ENCODE measurements at regions of chr16 and their contacts with region 1.

Region 1: GRCh38 chr16:70438969-70439862 is at the start of gene ST3GAL2:
- DNase-seq: peak; percentile 90 to 94 (median 91)
- H3K4me3 ChIP-seq: peak within 1 kb of the TSS; percentile 67 to 95
- H3K4me3 Mint-ChIP-seq: peak within 1 kb of the TSS; percentile 93 to 99 (median 96)
- H3K27ac ChIP-seq: peak within 1 kb of the TSS; percentile 64
- H3K27ac Mint-ChIP-seq: peak within 1 kb of the TSS; percentile 86 to 97 (median 94)
- H3K4me1 ChIP-seq: peaks cover 35% of the 10 kb centered on the region
- H3K4me1 Mint-ChIP-seq: peaks cover 17 to 49% (median 35%) of the 10 kb centered on the region in 4 donors
- H3K27me3 ChIP-seq: no peaks in the 10 kb centered on the region
- H3K27me3 Mint-ChIP-seq: no peaks in the 10 kb centered on the region
- total RNA-seq, gene ST3GAL2: 27.5 to 30.8 TPM

Region 2: GRCh38 chr16:70337814-70338213 is 101.4 kb before region 1 on chr16:
- CTCF ChIA-PET with region 1: no interaction called
- POLR2A ChIA-PET with region 1: no interaction called
- intact Hi-C with region 1: no loop called
- DNase-seq: no peak
- H3K4me3 ChIP-seq: no peak overlapping the region
- H3K4me3 Mint-ChIP-seq: no peak overlapping the region
- H3K27ac ChIP-seq: no peak overlapping the region
- H3K27ac Mint-ChIP-seq: no peak overlapping the region
- H3K4me1 ChIP-seq: no peaks in the 10 kb centered on the region
- H3K4me1 Mint-ChIP-seq: peaks cover 0 to 2% (median 0%) of the 10 kb centered on the region in 4 donors
- H3K27me3 ChIP-seq: no peaks in the 10 kb centered on the region
- H3K27me3 Mint-ChIP-seq: no peaks in the 10 kb centered on the region

Region 3: DNA sequence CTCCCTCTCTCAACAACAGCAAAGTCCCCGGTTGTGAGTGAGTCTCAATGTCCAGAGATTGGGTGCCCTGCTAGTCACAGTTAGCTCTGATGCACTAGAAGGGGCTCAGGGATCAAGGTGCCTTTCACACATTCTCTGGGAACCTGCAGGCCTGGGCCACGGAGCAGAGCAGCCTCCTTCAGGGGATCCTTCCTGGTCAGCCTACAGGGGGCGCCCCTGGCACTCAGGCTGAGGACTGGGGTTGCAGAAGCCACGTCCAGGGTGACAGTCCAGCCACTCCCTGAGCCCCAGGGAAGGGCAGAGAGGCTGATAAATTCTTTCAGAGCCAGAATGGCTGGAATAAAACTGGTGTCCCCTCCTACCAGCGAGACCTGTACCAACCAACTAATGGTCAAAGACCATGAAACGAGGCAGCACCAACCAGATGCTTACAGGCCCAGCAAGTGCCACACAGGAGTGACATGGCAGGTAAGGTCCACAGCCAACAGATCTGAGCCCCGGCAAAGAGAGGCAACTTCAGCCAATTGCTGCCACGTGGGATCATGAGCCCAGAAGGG is 43.8 kb before region 1 on chr16:
- CTCF ChIA-PET with region 1: interaction called, 5 read pairs
- POLR2A ChIA-PET with region 1: no interaction called
- intact Hi-C with region 1: loop called (anchors 1 kb)
- DNase-seq: peak in 4 of 5 donors; percentile 48 to 50 (median 49)
- H3K4me3 ChIP-seq: no peak overlapping the region
- H3K4me3 Mint-ChIP-seq: no peak overlapping the region
- H3K27ac ChIP-seq: no peak overlapping the region
- H3K27ac Mint-ChIP-seq: peak overlapping the region in 2 of 7 donors; percentile 63 to 66
- H3K4me1 ChIP-seq: no peaks in the 10 kb centered on the region
- H3K4me1 Mint-ChIP-seq: peaks cover 0 to 2% (median under 1%) of the 10 kb centered on the region in 4 donors
- H3K27me3 ChIP-seq: no peaks in the 10 kb centered on the region
- H3K27me3 Mint-ChIP-seq: no peaks in the 10 kb centered on the region

Region 4: DNA sequence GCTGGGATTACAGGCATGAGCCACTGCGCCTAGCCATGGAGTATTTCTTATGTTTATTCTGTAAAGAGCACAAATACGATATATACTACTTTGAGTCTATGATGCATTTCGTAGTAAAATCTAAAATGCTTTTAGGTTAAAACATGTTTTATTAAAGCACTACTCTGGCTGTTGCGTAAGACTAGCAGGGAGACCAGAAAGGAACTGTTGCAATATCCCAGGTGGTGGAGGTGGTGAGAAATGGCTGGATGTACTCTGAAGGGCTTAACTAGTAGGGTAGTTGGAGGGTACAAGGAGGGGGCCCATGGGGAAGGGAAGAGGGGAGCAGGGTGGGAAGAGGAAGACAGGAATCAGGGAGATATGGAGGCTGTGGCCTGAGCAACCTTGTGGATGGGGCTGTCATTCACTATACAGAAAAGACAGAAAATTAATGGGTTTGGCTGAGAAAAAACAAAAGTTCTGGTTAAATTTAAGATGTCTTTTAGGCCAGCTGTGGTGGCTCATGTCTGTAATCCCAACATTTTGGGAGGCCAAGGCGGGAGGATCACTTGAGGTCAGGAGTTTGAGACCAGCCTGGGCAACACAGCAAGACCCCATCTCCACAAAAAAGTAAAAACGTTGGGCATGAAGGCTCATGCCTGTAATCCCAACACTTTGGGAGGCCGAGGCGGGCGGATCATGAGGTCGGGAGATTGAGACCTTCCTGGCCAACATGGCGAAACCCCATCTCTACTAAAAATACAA is 36.1 kb before region 1 on chr16:
- CTCF ChIA-PET with region 1: no interaction called
- POLR2A ChIA-PET with region 1: interaction called, 4 read pairs
- intact Hi-C with region 1: loop called (anchors 1 kb)
- DNase-seq: no peak
- H3K4me3 ChIP-seq: no peak overlapping the region
- H3K4me3 Mint-ChIP-seq: peak overlapping the region in 3 of 8 donors; percentile 26 to 41 (median 36)
- H3K27ac ChIP-seq: no peak overlapping the region
- H3K27ac Mint-ChIP-seq: peak overlapping the region in 6 of 7 donors; percentile 7 to 93 (median 78)
- H3K4me1 ChIP-seq: peaks cover 28% of the 10 kb centered on the region
- H3K4me1 Mint-ChIP-seq: peaks cover 28 to 59% (median 41%) of the 10 kb centered on the region in 4 donors
- H3K27me3 ChIP-seq: no peaks in the 10 kb centered on the region
- H3K27me3 Mint-ChIP-seq: no peaks in the 10 kb centered on the region

Region 5: DNA sequence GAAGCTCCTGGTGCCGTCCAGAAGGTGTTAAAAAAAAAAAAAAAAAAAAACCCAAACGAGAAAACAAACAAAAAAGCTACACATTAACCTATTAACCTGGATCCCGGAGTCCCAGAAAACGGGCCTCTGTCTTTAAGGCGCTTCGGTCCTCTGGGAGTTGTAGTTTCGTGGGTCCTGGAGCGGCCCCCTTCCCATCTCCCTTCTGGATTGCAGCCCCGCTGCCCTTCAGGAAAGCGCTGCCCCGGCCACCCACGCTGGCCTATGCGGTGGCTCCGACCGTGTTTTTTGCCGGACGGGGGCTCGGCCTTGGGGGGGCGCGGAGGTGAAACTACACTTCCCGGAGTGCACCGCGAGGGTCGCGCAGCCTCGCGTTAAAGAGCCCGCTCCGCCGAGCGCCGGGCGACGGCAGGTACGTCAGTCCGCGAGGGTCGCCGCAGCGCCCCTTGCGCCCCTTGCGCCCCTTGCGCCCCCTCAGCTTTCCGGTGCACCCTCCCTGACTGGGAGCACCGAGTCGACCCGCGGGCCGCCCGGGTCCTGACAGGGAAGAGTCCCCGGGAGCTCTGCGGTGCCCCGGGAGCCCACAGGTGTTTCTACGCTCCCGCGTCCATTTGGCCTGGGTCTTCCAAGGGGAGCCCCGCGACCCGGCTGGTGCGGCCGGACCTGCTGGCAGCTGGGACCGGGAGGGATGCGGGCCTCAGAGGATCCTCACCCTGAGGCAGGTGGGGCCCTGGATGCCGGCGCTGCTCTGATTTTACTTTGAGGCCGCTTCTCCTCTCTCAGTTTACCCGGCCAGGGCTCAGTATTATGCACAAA is 15.2 kb after region 1 on chr16 and contains the start of gene FCSK:
- CTCF ChIA-PET with region 1: interaction called, 5 read pairs
- POLR2A ChIA-PET with region 1: interaction called, 32 read pairs
- intact Hi-C with region 1: loop called (anchors 1 kb)
- DNase-seq: peak; percentile 74 to 89 (median 85)
- H3K4me3 ChIP-seq: peak within 1 kb of the TSS; percentile 74 to 98
- H3K4me3 Mint-ChIP-seq: peak within 1 kb of the TSS; percentile 89 to 96 (median 91)
- H3K27ac ChIP-seq: peak within 1 kb of the TSS; percentile 91
- H3K27ac Mint-ChIP-seq: peak within 1 kb of the TSS; percentile 88 to 95 (median 92)
- H3K4me1 ChIP-seq: peaks cover 21% of the 10 kb centered on the region
- H3K4me1 Mint-ChIP-seq: peaks cover 16 to 22% (median 20%) of the 10 kb centered on the region in 4 donors
- H3K27me3 ChIP-seq: no peaks in the 10 kb centered on the region
- H3K27me3 Mint-ChIP-seq: peaks cover 0 to 2% of the 10 kb centered on the region in 2 donors
- total RNA-seq, gene FCSK: 41.7 to 42.8 TPM

Region 6: GRCh38 chr16:70523076-70523742 is 84.0 kb after region 1 on chr16 and contains the start of gene COG4:
- CTCF ChIA-PET with region 1: no interaction called
- POLR2A ChIA-PET with region 1: interaction called, 7 read pairs
- intact Hi-C with region 1: loop called (anchors 1 kb)
- DNase-seq: peak; percentile 90 to 94 (median 91)
- H3K4me3 ChIP-seq: peak within 1 kb of the TSS; percentile 90 to 97
- H3K4me3 Mint-ChIP-seq: peak within 1 kb of the TSS; percentile 96 to 99 (median 98)
- H3K27ac ChIP-seq: peak within 1 kb of the TSS; percentile 86
- H3K27ac Mint-ChIP-seq: peak within 1 kb of the TSS; percentile 97 to 100 (median 99)
- H3K4me1 ChIP-seq: peaks cover 64% of the 10 kb centered on the region
- H3K4me1 Mint-ChIP-seq: peaks cover 35 to 75% (median 54%) of the 10 kb centered on the region in 4 donors
- H3K27me3 ChIP-seq: no peaks in the 10 kb centered on the region
- H3K27me3 Mint-ChIP-seq: no peaks in the 10 kb centered on the region
- total RNA-seq, gene COG4: 66.5 to 68.9 TPM

Region 7: DNA sequence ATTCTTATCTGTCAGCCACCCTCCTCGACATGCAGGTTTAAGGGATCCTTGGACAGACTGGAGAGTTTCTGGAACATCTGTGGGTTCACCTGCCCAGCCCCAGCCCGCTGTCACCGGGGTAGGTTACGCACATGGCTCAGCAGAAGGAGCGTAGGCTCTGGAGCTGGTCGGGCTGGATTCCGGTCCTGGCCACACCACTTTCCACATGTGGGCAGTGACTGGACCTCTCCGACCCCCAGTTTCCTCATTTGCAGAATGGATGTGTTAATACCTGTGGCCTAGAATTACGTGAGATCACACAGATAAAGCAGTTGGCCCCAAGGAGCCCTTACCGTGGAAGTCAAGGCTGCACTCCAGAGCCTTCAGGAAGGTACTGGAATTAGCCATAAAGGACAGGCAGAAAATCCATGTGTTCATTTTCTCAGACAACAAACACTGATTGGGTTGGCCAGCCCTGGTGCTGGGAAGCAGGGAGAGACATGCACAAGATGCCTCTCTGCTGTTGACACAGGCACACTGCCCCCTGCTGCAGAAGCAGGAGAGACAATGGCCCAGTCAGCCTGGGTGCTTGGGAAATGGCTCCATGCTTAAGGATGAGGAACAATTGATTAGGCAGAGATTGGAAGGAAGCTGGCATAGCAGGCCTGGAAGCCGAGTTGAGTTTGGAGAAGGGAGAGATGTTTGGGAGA is 143.2 kb after region 1 on chr16:
- CTCF ChIA-PET with region 1: no interaction called
- POLR2A ChIA-PET with region 1: no interaction called
- intact Hi-C with region 1: no loop called
- DNase-seq: no peak
- H3K4me3 ChIP-seq: no peak overlapping the region
- H3K4me3 Mint-ChIP-seq: no peak overlapping the region
- H3K27ac ChIP-seq: no peak overlapping the region
- H3K27ac Mint-ChIP-seq: peak overlapping the region in 2 of 7 donors; percentile 5 to 77
- H3K4me1 ChIP-seq: no peaks in the 10 kb centered on the region
- H3K4me1 Mint-ChIP-seq: no peaks in the 10 kb centered on the region
- H3K27me3 ChIP-seq: no peaks in the 10 kb centered on the region
- H3K27me3 Mint-ChIP-seq: peaks cover 0 to 5% of the 10 kb centered on the region in 2 donors

Region 8: GRCh38 chr16:70674221-70675014 is 235.2 kb after region 1 on chr16:
- CTCF ChIA-PET with region 1: no interaction called
- POLR2A ChIA-PET with region 1: no interaction called
- intact Hi-C with region 1: no loop called
- DNase-seq: no peak
- H3K4me3 ChIP-seq: no peak overlapping the region
- H3K4me3 Mint-ChIP-seq: no peak overlapping the region
- H3K27ac ChIP-seq: no peak overlapping the region
- H3K27ac Mint-ChIP-seq: peak overlapping the region in 1 of 7 donors; percentile 5
- H3K4me1 ChIP-seq: no peaks in the 10 kb centered on the region
- H3K4me1 Mint-ChIP-seq: peaks cover 0 to 1% (median 0%) of the 10 kb centered on the region in 4 donors
- H3K27me3 ChIP-seq: no peaks in the 10 kb centered on the region
- H3K27me3 Mint-ChIP-seq: no peaks in the 10 kb centered on the region

Region 9: DNA sequence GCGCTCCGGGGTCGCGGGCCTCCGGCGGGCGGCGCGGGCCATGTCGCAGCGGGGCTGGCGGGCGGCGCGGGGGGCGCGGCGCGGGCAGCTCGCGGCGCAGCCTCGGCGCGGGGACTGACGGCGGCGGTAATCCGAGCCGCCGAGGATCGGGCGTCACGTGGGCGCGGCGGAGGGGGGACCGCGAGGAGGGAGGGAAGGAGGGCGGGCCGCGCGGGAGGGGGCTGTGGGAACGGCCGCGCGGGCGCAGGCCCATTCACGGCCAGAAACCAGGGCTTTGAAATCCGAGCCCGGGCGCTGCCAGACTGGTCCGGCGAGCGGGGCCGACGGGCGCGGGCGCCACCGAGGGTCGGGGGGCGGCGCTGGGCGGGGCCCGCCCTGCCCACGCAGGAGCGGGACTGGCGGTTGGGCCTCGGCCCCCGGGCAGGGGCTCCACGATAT is 246.7 kb after region 1 on chr16 and contains the start of gene MTSS2:
- CTCF ChIA-PET with region 1: no interaction called
- POLR2A ChIA-PET with region 1: no interaction called
- intact Hi-C with region 1: no loop called
- DNase-seq: peak in 1 of 5 donors; percentile 27
- H3K4me3 ChIP-seq: no peak within 1 kb of the TSS
- H3K4me3 Mint-ChIP-seq: peak within 1 kb of the TSS; percentile 20 to 70 (median 62)
- H3K27ac ChIP-seq: no peak within 1 kb of the TSS
- H3K27ac Mint-ChIP-seq: peak within 1 kb of the TSS in 1 of 7 donors; percentile 46
- H3K4me1 ChIP-seq: peaks cover 7% of the 10 kb centered on the region
- H3K4me1 Mint-ChIP-seq: peaks cover 0 to 8% (median 3%) of the 10 kb centered on the region in 4 donors
- H3K27me3 ChIP-seq: peaks cover 5% of the 10 kb centered on the region
- H3K27me3 Mint-ChIP-seq: peaks cover 13 to 16% of the 10 kb centered on the region in 2 donors
- total RNA-seq, gene MTSS2: 1.8 to 1.9 TPM

Measured in CD4-positive, alpha-beta memory T cell (primary cell).